Posterior cingulate gyrus (tissue), 11 donors: ENCODE measurements at regions of chr10 and their contacts with region 1.

Region 1: DNA sequence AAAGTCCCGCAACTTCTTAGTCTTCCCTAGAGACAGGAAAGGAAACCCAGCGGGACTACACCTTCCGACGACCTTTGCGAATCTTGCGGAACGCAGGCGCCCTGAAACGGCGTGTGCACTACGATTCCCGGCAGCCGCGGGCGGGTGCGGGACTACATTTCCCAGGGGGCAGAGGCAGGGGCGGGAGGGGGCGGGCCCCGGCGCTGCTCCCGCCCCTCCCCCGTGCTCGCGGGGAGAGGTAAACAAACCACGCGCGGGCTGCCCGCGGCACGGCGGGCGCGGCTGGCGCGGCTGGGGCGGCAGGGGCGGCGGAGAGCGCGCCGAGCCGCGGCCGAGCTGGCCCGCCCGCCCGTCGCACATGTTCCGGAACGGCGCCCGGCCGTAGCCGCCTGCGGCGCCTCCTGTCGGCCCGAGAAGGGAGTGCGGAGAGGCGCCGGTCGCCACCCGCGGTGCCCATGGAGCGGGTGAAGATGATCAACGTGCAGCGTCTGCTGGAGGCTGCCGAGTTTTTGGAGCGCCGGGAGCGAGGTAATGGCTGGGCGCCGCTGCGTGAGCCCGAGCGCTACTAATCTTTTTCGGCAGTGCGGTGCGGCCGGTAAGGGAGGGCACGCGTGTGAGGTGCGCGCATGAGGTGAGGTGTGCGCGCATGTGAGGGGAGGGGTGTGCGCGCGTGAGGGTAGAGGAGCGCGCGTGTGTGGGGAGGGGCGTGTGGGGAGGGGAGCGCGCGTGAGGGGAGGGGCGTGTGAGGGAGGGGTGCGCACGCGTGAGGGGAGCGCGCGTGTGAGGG is 18.5 kb downstream of the MXI1 start:
- DNase-seq: peak; percentile 85 to 99 (median 90)

Region 2: GRCh38 chr10:110007701-110008517 is 218.0 kb before region 1 on chr10 and contains the start of gene ADD3:
- intact Hi-C with region 1: loop called (anchors 10 kb)
- DNase-seq: peak; percentile 90 to 99 (median 95)

Region 3: DNA sequence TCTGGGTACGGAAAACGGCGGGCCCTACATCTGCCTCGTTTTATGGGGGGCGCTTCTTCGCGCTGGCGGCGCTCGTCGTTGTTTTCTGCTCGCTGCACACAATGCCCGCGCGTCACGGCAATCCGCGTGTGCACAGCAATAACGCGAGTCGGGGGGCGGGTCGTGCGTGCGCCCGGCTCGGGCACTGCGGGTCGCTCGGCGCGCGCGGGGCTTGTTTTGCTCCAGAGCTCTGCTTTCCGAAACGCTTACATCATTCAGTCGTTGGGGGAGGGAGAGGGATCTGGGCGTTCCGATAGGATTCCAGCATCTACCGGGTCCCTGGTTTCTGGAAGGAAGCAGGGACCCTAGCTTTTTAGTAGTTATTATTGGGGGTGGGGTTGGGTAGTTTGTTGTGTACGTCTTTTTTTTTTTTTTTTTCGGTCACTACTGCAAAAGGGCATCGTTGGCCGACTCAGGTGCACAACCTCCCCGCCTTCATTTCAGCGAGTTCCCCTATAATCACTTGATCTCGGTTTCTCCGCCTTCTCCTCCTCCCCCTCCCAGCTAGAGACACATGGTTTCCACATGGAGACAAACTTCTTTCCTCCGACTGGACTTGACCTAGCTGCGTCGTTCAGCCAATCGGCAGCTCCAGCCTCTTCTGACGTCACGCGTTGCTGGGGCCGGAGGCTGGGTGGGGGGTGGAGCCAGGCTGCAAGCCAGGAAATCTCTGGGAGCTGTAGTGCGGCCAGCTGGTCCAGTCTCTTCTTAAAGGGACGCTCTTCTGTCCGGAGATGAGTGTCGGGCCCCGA is 15.1 kb before region 1 on chr10:
- intact Hi-C with region 1: loop called (anchors 1 kb)
- DNase-seq: peak; percentile 98 to 100 (median 99)

Region 4: GRCh38 chr10:110269374-110270318 is 43.7 kb after region 1 on chr10:
- intact Hi-C with region 1: loop called (anchors 2 kb)
- DNase-seq: peak in 1 of 10 donors; percentile 32

Region 5: DNA sequence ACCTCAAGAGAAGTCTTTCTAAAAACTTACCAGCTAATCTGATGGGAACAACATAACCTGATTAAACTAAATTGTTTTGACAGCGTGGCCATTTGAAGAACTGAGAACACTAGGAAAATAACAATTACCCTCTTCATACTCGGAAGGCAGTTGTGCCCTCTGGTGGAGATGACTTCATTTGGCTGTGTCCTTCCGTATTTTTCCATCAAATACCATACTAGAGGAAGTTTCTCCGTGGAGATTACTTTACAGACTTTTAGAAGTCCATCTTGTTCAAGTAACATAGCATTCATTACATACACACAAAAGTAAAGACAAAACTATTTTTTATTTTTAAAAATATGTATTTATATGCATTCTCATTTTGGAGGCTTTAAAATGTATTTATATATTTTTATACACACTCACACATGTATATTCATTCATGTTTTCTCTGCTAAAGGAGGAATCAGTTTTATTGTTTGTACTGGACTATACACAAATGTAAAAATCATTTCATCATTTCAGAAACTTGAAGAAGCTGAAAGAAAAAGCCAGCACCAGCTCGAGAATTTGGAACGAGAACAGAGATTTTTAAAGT is 53.5 kb after region 1 on chr10:
- intact Hi-C with region 1: loop called (anchors 1 kb)
- DNase-seq: peak in 4 of 10 donors; percentile 52 to 70 (median 56)

Region 6: DNA sequence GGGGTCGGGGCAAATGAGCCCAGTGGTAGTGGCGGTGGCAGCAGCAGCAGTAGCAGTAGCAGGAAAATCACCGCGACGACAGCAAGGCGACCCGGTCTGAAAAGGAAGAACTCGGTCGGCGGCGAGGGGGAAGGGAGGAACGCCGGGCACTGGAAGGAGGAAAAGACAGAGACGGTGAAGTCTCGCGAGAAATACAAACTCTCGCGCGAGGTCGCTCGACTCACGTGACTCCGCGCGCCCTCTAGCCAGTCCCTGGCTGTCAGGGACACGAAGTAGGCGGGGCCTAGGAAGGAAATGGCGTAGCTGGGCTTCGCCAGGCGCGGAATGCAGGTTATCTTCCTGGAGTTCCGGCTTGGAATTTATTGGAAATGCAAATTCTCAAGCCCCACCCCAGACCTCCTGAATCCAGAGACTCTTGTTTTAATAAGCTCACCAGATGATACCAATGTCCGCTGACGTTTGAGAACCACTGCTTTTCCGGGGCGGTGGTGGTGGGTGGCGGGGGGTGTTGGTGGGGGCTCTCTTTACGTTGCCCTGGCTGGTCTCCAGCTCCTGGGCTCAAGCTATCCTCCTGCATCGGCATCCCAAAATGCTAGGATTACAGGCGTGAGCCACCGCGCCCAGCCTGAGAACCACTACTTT is 79.0 kb after region 1 on chr10 and contains the start of gene SMNDC1:
- intact Hi-C with region 1: loop called (anchors 2 kb)
- DNase-seq: peak; percentile 97 to 100 (median 98)